Gastrocnemius medialis (tissue), 4 donors: ENCODE measurements at regions of chr7 and their contacts with region 1.

Region 1: DNA sequence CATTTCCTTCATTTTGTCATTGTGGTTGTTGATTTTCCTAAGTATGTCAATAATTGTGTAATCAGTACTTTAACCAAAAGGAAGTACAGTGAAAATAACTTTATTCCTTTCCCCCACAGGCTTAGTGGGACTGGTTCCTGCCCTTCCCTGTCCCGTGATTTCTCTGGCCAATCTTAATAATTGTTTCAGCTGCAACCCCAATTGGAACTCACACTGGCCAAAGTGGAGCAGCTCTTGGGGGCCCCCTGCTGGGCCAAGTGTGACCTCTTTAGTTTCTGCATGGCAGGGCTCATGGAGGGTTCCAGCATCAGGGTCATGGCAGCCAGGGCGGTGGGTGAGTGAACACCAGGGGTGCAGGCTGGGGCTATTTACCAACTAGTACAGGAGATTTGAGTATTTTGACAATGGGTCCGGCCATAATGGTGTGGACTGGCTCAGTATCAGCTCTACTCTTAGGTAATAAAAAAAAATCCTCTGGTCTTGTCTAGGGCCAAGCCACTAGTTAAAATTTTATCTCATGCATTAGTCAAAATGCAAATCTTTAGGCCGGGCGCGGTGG is 31.7 kb downstream of the CYCS start:
- DNase-seq: peak in 1 of 2 donors; percentile 27
- ATAC-seq: peak in 1 of 2 donors; percentile 47
- H3K4me3 ChIP-seq: no peak overlapping the region
- H3K27ac ChIP-seq: no peak overlapping the region
- H3K4me1 ChIP-seq: peaks cover 0 to 4% of the 10 kb centered on the region in 2 donors
- H3K27me3 ChIP-seq: no peaks in the 10 kb centered on the region
- CTCF ChIP-seq: peak in 4 of 5 experiments; percentile 31 to 63 (median 42)
- POLR2A ChIP-seq: no peak

Region 2: GRCh38 chr7:24812310-24812945 is 280.9 kb before region 1 on chr7:
- in situ Hi-C with region 1: no loop called
- intact Hi-C with region 1: loop called (anchors 2 kb)
- DNase-seq: peak in 1 of 2 donors; percentile 27
- ATAC-seq: peak; percentile 52 to 75
- H3K4me3 ChIP-seq: no peak overlapping the region
- H3K27ac ChIP-seq: no peak overlapping the region
- H3K4me1 ChIP-seq: no peaks in the 10 kb centered on the region
- H3K27me3 ChIP-seq: no peaks in the 10 kb centered on the region
- CTCF ChIP-seq: peak; percentile 61 to 90 (median 76)
- POLR2A ChIP-seq: no peak